ENCODE measurements at regions of chr6 and their contacts with region 1.

Region 1: GRCh38 chr6:24974182-24975171 is 38.7 kb upstream of the RIPOR2 start:
- DNase-seq: peak; percentile 70
- ATAC-seq: peak; percentile 90
- H3K4me3 Mint-ChIP-seq: peak overlapping the region; percentile 41
- H3K27ac Mint-ChIP-seq: peak overlapping the region; percentile 92
- H3K4me1 Mint-ChIP-seq: peaks cover 49% of the 10 kb centered on the region
- H3K27me3 Mint-ChIP-seq: no peaks in the 10 kb centered on the region
- CTCF ChIP-seq: no peak

Region 2: GRCh38 chr6:24940311-24940917 is 34.1 kb before region 1 on chr6:
- CTCF ChIA-PET with region 1: interaction called, 5 read pairs
- POLR2A ChIA-PET with region 1: interaction called, 11 read pairs
- intact Hi-C with region 1: loop called (anchors 5 kb)
- DNase-seq: no peak
- ATAC-seq: no peak
- H3K4me3 Mint-ChIP-seq: peak overlapping the region; percentile 49
- H3K27ac Mint-ChIP-seq: peak overlapping the region; percentile 86
- H3K4me1 Mint-ChIP-seq: peaks cover 65% of the 10 kb centered on the region
- H3K27me3 Mint-ChIP-seq: no peaks in the 10 kb centered on the region
- CTCF ChIP-seq: no peak

Region 3: GRCh38 chr6:24949020-24949569 is 25.4 kb before region 1 on chr6:
- CTCF ChIA-PET with region 1: interaction called, 3 read pairs
- POLR2A ChIA-PET with region 1: interaction called, 13 read pairs
- intact Hi-C with region 1: no loop called
- DNase-seq: peak; percentile 64
- ATAC-seq: peak; percentile 50
- H3K4me3 Mint-ChIP-seq: peak overlapping the region; percentile 37
- H3K27ac Mint-ChIP-seq: peak overlapping the region; percentile 88
- H3K4me1 Mint-ChIP-seq: peaks cover 70% of the 10 kb centered on the region
- H3K27me3 Mint-ChIP-seq: no peaks in the 10 kb centered on the region
- CTCF ChIP-seq: no peak

Region 4: GRCh38 chr6:24960991-24961475 is 13.4 kb before region 1 on chr6:
- CTCF ChIA-PET with region 1: interaction called, 4 read pairs
- POLR2A ChIA-PET with region 1: interaction called, 16 read pairs
- intact Hi-C with region 1: no loop called
- DNase-seq: no peak
- ATAC-seq: peak; percentile 52
- H3K4me3 Mint-ChIP-seq: peak overlapping the region; percentile 34
- H3K27ac Mint-ChIP-seq: peak overlapping the region; percentile 77
- H3K4me1 Mint-ChIP-seq: peaks cover 69% of the 10 kb centered on the region
- H3K27me3 Mint-ChIP-seq: no peaks in the 10 kb centered on the region
- CTCF ChIP-seq: no peak